BJ (cell line): ENCODE measurements at regions of chr18 and their contacts with region 1.

Region 1: GRCh38 chr18:3771121-3771971 is 321.4 kb downstream of the TGIF1 start:
- DNase-seq: peak; percentile 62
- H3K4me3 ChIP-seq: peak overlapping the region; percentile 31
- H3K27me3 ChIP-seq: no peaks in the 10 kb centered on the region
- CTCF ChIP-seq: peak; percentile 84

Region 2: GRCh38 chr18:3703732-3704176 is 67.6 kb before region 1 on chr18:
- CTCF ChIA-PET with region 1: interaction called, 21 read pairs
- POLR2A ChIA-PET with region 1: no interaction called
- DNase-seq: no peak
- H3K4me3 ChIP-seq: 0 out of 2 replicates have a peak overlapping the region, but pooled peaks have one; percentile 6
- H3K27me3 ChIP-seq: peaks cover 1% of the 10 kb centered on the region
- CTCF ChIP-seq: peak; percentile 83

Region 3: DNA sequence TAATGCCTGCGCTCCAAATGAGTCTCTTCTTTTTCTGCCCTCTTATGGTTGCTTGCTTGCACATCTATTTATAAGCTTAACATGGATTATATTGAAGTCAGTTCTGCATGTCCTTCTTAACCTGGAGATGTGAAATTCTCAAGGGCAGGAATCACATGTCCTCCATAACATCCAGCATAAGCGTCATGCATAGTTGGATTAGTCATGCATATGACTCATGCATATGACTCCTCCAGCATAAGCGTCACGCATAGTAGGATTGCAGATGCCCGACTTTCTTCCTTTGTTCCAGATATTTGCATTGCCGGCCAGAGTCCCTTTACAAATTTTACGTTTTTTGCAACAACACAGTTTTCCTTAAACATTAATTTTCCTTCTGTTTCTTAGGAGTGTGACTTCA is 12.8 kb before region 1 on chr18:
- CTCF ChIA-PET with region 1: interaction called, 15 read pairs
- POLR2A ChIA-PET with region 1: no interaction called
- DNase-seq: no peak
- H3K4me3 ChIP-seq: no peak overlapping the region
- H3K27me3 ChIP-seq: no peaks in the 10 kb centered on the region
- CTCF ChIP-seq: no peak

Region 4: DNA sequence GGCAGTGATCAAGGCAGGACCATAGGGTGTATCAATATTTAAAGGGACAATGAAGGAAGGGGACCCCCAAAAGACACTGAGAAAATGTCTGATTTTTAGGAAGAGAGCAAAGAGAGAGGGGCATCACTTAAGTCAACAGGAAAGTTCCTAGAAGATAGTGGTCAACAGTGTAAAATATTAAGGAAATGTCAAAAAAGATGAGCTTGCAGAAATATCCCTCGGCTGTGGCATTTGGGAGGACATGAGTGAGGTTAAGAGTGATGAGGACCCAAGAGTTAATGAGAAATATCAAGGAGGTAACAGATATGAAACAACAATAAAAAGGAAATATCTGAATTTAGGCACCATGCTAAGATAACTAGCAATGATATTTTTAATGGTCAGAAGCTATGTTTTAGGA is 18.2 kb after region 1 on chr18:
- CTCF ChIA-PET with region 1: interaction called, 11 read pairs
- POLR2A ChIA-PET with region 1: no interaction called
- DNase-seq: no peak
- H3K4me3 ChIP-seq: no peak overlapping the region
- H3K27me3 ChIP-seq: no peaks in the 10 kb centered on the region
- CTCF ChIP-seq: no peak

Region 5: DNA sequence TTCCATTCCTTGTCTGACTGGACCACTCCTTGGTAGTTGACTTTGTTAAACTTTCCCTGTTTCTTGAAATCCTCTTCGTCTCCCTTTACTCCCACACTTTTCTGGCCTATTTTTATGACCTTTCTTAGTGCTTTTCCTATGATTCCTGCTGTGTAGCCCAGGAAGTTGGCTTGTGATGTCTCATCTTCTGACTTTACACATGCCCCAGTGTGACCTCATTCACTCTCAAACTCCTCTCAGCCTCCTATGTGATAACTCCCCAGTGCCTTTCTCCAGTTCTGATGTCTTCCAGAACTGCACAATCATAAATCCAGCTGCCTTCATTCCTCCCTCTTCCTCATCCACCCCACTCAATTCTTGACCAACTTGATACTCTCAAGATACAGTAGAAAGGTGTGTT is 86.2 kb after region 1 on chr18:
- CTCF ChIA-PET with region 1: interaction called, 13 read pairs
- POLR2A ChIA-PET with region 1: no interaction called
- DNase-seq: no peak
- H3K4me3 ChIP-seq: no peak overlapping the region
- H3K27me3 ChIP-seq: no peaks in the 10 kb centered on the region
- CTCF ChIP-seq: no peak

Region 6: GRCh38 chr18:3983351-3983969 is 212.1 kb after region 1 on chr18:
- CTCF ChIA-PET with region 1: interaction called, 38 read pairs
- POLR2A ChIA-PET with region 1: no interaction called
- DNase-seq: peak; percentile 45
- H3K4me3 ChIP-seq: no peak overlapping the region
- H3K27me3 ChIP-seq: no peaks in the 10 kb centered on the region
- CTCF ChIP-seq: no peak